AG04449 (cell line): ENCODE measurements at regions of chr10 and their contacts with region 1.

Region 1: GRCh38 chr10:60208676-60209269 is 180.9 kb downstream of the ANK3 start:
- DNase-seq: no peak
- H3K4me3 ChIP-seq: no peak overlapping the region
- CTCF ChIP-seq: peak; percentile 65

Region 2: DNA sequence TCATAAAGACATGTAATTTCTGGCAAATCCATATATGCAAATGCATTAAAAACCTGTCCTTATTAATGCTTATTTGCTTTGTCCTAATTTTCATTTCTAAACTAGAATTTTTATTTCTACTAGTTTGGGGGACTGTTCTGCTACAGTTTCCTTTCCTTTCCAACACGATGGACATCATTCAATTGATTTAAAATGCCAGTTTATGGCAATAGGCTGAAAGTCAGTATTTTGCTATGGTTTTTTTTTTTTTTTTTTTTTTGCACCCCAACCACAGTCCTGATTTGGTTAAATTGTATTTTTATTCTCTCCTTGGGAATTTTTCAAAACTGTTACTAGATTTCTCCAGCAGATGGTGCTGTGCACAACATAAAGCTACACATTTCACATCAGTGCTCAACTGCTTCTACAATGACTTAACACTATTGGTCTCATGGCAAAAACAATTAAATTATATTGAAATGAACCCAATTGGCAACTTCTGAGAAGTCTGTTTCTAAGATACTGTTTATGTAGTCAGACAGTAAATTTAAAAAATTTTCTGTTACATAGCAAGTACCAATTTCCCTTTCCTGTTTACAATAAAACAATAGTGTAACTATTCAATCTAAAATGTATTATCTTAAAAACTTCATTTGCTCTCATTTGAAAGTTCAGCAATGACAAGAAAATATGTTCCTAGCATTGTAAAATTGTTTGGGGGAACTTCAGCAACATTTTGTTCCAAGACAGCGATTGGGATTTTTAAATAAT is 108.6 kb before region 1 on chr10:
- CTCF ChIA-PET with region 1: interaction called, 415 read pairs
- POLR2A ChIA-PET with region 1: no interaction called
- DNase-seq: no peak
- H3K4me3 ChIP-seq: no peak overlapping the region
- CTCF ChIP-seq: peak; percentile 44

Region 3: DNA sequence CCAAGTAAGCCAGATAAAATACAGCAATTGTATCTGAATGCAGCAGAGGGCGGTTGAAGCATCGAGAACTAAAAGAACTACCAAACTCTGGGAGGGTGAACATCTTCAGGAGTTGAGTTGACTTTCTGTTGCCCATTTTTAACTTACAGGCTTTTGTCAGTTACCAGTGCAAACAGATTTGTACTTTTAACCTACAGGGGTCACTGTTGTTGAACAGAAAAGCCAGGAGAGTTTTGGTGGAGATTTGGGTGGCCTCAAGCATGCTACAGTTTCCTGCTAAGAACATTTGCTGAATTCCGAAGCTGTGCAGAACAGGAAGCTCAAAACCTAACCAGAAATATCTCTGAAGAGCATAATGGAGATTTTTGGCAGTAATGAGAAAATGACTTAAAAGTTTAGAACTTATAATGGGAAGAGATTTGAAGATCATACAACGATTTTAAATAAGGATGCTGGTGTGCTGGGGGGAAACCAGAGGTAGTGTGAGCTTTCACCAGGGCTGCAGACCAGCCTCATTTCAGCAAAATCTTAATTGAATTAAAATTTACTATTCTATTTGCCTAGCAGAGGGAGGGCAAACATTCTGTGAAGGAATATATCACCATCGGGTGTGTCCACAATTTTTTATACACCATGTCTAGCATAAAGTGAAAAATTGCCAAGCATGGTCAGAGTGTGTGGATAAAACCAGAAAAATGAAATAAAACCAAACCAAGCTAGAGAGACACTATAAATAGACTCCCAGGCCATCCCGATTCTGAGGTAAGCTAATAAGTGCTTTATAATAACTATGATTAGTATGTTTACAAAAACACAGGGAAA is 93.8 kb before region 1 on chr10:
- CTCF ChIA-PET with region 1: interaction called, 234 read pairs
- POLR2A ChIA-PET with region 1: no interaction called
- DNase-seq: peak; percentile 52
- H3K4me3 ChIP-seq: no peak overlapping the region
- CTCF ChIP-seq: peak; percentile 42

Region 4: DNA sequence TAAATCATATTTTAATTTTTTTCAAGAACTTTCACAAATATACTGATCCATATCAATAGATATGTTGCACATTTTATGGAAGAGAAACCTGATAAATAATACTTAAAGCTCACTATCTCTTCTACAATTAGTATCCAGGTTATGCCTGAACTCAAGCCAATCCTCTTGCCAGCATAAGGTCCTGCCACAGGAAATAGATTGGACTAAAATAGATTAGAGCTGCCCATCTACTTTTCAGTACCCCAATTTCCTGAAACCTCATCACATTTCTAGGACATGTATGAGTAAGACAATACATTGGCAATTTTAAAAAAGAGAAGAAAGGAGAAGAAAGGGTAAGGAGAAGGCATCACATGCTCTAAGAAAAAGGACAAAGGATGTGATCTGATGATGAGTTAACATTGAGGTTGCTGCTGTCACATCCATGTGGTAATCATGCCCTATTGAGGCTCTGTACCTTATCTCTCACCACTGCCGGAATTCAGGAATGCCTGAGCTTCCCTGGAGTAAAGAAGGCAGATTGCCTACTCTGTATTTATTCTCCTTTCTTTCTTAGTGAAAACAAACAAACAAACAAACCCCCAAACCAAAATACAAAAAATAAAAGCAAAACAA is 18.8 kb before region 1 on chr10:
- CTCF ChIA-PET with region 1: interaction called, 53 read pairs
- POLR2A ChIA-PET with region 1: no interaction called
- DNase-seq: no peak
- H3K4me3 ChIP-seq: no peak overlapping the region
- CTCF ChIP-seq: no peak

Region 5: GRCh38 chr10:60237977-60238758 is 29.4 kb after region 1 on chr10:
- CTCF ChIA-PET with region 1: interaction called, 14 read pairs
- POLR2A ChIA-PET with region 1: no interaction called
- DNase-seq: no peak
- H3K4me3 ChIP-seq: no peak overlapping the region
- CTCF ChIP-seq: peak; percentile 41

Region 6: DNA sequence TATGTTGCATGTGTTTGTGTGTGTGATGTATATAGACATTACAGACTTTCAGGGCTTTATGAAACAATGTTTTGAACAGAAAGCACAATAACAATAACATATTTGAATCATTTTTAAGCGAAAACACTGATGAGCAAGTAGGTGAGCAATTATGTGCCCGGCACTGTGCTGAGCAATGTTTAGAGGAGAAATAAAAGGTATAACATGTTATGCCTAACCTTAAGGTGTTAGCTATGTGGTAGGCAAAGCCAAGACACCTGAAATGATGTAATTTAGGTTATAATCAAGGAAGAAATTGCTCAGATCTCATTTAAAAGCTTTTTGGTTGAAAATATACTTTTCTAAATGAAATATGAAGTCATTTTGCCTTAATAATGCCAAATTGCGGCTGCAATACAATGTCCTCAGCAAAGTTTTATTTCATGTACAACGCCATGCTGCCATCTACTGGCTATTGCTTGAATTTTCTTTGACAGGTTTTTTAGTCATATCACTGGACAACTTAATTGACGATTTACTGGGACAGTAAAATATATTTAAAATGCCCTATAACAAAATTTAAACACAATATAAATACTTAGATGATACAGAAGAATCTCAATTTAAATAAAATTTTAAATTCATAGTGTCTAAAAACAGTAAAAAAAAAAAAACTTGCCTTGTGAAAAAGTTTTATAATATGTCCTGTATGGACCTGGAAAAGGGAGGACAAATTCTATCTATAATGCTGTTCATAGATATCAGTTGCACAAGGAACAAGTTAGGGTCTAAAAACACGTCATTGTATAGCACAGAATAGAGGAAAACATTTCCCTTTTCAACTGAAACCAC is 438.4 kb after region 1 on chr10:
- CTCF ChIA-PET with region 1: interaction called, 10 read pairs
- POLR2A ChIA-PET with region 1: no interaction called
- DNase-seq: no peak
- H3K4me3 ChIP-seq: no peak overlapping the region
- CTCF ChIP-seq: peak; percentile 42